HEK293 (cell line): ENCODE measurements at regions of chr19 and their contacts with region 1.

Region 1: DNA sequence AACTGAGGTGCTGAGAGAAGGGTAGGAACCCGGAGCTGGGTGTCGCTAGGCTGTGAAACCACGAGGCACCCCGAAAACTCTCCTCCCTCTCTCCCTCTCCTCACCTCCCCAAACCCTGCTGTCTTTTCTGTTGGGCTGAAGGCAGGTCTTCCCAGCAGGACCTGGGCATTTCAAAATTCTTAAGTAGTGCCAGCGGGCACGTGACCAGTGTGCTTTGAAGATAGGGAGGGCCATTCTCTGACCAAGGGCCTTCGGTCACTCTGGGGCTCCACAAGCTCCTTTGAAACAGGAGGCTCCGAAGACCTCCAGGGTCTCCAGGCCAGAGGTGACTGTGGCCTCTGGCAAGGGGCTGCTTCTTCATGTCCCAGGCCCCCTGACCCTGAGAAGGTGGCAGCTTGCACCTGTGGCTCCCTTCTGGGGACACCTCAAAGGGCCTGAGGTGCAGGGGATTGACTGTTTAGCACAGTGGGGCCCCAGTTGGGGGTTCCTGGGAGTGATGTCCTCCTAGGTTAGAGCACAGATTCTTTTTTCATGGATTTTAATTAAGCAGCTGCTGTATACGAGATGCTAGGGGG is 48.3 kb downstream of the DNM2 start:
- H3K4me3 ChIP-seq: no peak overlapping the region
- H3K27ac ChIP-seq: no peak overlapping the region
- H3K4me1 ChIP-seq: no peaks in the 10 kb centered on the region
- CTCF ChIP-seq: no peak

Region 2: DNA sequence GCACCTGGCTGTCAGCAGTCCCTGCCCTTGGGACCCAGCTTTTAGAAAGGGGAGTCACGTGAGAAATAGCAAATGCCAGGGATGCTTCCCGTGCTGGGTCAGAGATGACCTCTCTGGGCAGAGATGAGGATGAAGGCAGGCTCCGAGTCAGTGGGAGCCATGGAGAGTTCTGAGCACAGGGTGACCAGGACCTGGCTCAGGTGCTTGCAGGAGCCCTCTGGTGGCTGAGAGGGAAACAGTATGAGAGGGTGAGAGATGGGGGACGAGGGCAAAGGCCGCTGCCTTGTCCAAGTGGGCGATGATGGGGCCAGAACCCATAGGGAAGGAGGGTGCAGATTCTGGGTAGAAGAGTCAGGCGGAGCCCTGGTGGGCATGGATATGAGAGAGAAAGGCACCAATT is 54.0 kb after region 1 on chr19:
- CTCF ChIA-PET with region 1: interaction called, 10 read pairs
- POLR2A ChIA-PET with region 1: no interaction called
- H3K4me3 ChIP-seq: no peak overlapping the region
- H3K27ac ChIP-seq: no peak overlapping the region
- H3K4me1 ChIP-seq: no peaks in the 10 kb centered on the region
- CTCF ChIP-seq: peak; percentile 14; the same call in 1 of the 2 replicates